H1 (cell line): ENCODE measurements at regions of chr6 and their contacts with region 1.

Region 1: GRCh38 chr6:25223490-25223991 is 55.6 kb upstream of the CARMIL1 start:
- DNase-seq: peak in 1 of 2 experiments; percentile 73
- H3K4me3 ChIP-seq: no peak overlapping the region
- H3K27ac ChIP-seq: no peak overlapping the region
- H3K4me1 ChIP-seq: no peaks in the 10 kb centered on the region
- H3K27me3 ChIP-seq: no peaks in the 10 kb centered on the region
- CTCF ChIP-seq: peak in 2 of 3 experiments; percentile 64 to 80; a peak in 3 of 4 replicates
- EP300 ChIP-seq: no peak
- POLR2A ChIP-seq: no peak
- RAD21 ChIP-seq: peak; percentile 95 to 96

Region 2: DNA sequence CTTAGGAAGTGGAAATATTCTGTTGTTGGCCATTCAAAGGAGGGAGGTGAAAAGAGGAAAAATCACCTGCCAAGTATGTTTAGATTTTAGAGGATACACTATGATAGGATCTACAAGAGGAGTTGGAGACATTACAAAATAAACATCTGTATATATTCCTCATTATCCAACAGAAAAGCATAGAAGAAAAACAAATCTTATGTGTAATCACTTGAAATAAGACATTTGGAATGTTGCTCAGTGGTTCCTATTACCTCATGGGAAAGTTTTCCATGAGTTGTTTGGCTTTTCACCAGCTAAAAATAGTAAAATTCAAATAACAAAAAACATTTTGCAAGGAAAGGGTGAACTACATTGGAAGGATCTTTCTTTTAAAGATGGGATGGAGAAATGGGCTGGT is 21.0 kb before region 1 on chr6:
- CTCF ChIA-PET with region 1: interaction called, 16 read pairs
- POLR2A ChIA-PET with region 1: no interaction called
- DNase-seq: no peak
- H3K4me3 ChIP-seq: no peak overlapping the region
- H3K27ac ChIP-seq: no peak overlapping the region
- H3K4me1 ChIP-seq: peaks cover 0 to 6% (median 1%) of the 10 kb centered on the region in 4 experiments; a peak in 2 of 7 replicates
- H3K27me3 ChIP-seq: no peaks in the 10 kb centered on the region
- CTCF ChIP-seq: no peak
- EP300 ChIP-seq: no peak
- POLR2A ChIP-seq: no peak
- RAD21 ChIP-seq: no peak

Region 3: DNA sequence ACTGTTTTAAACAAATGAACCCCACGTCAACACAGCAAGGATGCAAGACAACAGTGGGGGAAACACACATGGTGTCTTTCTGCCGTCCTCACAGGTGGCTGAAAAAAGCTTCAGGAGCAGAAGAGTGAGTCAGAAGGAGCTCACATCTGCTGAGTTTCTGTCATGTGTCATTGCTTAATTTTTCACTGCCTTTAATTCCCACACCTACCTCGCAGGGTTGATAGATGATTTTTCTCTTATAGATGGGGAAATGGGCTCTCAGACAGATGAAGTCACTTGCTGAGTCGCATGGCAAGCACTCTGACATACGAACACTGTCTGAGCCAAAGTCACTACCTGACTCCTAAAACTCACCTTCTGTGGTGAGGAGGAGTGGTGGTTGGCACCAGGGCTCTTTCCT is 27.3 kb after region 1 on chr6:
- CTCF ChIA-PET with region 1: interaction called, 12 read pairs
- POLR2A ChIA-PET with region 1: no interaction called
- DNase-seq: no peak
- H3K4me3 ChIP-seq: no peak overlapping the region
- H3K27ac ChIP-seq: no peak overlapping the region
- H3K4me1 ChIP-seq: no peaks in the 10 kb centered on the region
- H3K27me3 ChIP-seq: no peaks in the 10 kb centered on the region
- CTCF ChIP-seq: no peak
- EP300 ChIP-seq: no peak
- POLR2A ChIP-seq: no peak
- RAD21 ChIP-seq: no peak

Region 4: GRCh38 chr6:25556516-25556915 is 333.0 kb after region 1 on chr6:
- CTCF ChIA-PET with region 1: interaction called, 23 read pairs
- POLR2A ChIA-PET with region 1: no interaction called
- DNase-seq: peak; percentile 38 to 93
- H3K4me3 ChIP-seq: no peak overlapping the region
- H3K27ac ChIP-seq: no peak overlapping the region
- H3K4me1 ChIP-seq: peaks cover 0 to 2% (median 0%) of the 10 kb centered on the region in 4 experiments; a peak in 1 of 7 replicates
- H3K27me3 ChIP-seq: peaks cover 0 to 1% (median 0%) of the 10 kb centered on the region in 4 experiments; a peak in 1 of 7 replicates
- CTCF ChIP-seq: peak; percentile 54 to 85 (median 76)
- EP300 ChIP-seq: no peak
- POLR2A ChIP-seq: no peak
- RAD21 ChIP-seq: peak; percentile 62 to 64

Region 5: GRCh38 chr6:25601800-25602673 is 378.5 kb after region 1 on chr6:
- CTCF ChIA-PET with region 1: interaction called, 27 read pairs
- POLR2A ChIA-PET with region 1: no interaction called
- DNase-seq: no peak
- H3K4me3 ChIP-seq: no peak overlapping the region
- H3K27ac ChIP-seq: no peak overlapping the region
- H3K4me1 ChIP-seq: no peaks in the 10 kb centered on the region
- H3K27me3 ChIP-seq: no peaks in the 10 kb centered on the region
- CTCF ChIP-seq: peak in 2 of 3 experiments; percentile 27 to 29; a peak in 2 of 4 replicates
- EP300 ChIP-seq: no peak
- POLR2A ChIP-seq: no peak
- RAD21 ChIP-seq: peak in 1 of 2 experiments; percentile 69; a peak in 3 of 4 replicates